Activated naive CD4-positive, alpha-beta T cell treated with anti-CD3 and anti-CD28 coated beads for 36 hours (primary cell): ENCODE measurements at regions of chr5 and their contacts with region 1.

Region 1: DNA sequence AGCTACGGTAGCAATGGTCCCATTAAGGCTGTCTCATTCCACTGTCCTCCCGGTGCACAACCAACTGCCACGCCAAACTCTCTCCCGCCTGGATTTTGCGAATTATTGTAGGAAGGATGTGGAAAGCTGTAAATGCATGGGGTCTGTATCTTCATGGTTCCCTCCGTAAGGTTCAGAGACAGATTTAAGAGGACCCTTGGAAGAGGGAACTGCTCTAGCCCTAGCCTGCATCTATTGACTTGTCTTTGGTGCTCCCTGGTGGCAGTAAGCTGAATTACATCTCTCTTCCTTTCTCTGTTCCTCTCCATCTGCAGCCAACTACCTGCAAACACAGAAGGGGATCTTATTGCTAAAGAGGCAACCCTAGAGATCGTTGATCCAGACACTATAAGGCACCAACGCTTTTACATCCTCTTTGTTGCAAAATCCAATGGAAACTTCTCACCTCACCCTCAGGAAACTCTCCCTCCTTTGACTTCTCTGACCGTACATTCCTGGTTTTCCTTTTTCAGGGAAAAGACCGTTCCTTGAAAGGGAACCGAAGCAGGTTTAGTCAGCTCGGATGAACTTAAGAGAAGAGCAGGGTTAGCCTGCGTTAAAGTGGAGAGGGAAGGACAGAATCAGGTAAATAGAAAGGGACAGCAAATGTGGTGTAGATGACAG is 11.9 kb downstream of the CAPSL start:
- DNase-seq: peak; percentile 83
- H3K4me3 Mint-ChIP-seq: peak overlapping the region; percentile 16
- H3K27ac Mint-ChIP-seq: no peak overlapping the region
- H3K4me1 Mint-ChIP-seq: peaks cover 46% of the 10 kb centered on the region
- H3K27me3 Mint-ChIP-seq: peaks cover 1% of the 10 kb centered on the region

Region 2: DNA sequence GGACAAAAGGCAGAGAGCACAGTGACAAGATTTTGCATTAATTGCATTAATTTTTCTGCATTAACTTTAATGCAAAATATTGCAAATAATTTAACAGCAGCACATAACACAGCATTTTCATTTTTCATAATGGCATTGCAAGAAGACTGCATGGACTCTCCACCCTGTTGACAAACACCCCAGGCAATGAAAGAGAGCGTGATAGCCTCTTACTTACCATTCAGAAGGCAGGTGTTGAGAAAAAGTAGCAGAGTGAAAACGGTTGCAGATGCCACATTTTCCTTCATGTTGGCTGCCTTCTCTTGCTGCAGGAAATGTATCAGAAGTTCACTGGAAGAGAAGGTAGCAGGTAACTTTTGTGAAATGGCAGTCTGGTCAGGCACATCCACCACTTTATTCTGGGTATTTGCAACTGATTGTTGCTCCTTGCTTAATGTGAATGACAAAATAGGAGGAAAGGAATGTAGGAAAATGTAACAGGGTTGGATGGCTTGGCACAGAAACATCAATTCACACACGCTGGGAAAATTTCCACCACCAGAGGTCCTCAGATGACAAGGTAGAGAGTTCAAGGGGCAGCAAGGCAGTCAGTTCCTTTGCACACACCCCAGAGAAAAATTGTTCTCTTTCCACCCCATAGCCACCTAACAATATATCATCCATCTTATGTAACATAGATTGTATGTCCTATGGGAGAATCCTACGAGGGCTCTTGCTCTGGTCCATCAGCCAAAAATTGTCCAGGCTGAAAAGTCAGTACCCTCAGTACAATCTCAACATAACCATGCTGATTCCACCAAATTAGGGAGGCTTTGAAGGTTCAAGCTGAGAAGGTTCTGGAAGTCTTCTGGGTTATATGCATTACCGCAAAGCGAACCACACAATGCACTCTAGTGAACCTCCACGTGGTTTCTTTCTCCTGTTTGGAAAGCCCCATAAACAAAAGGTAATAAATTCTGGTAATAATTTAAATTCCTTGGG is 836.9 kb before region 1 on chr5:
- CTCF ChIA-PET with region 1: interaction called, 23 read pairs
- intact Hi-C with region 1: loop called (anchors 1 kb)
- DNase-seq: peak; percentile 79
- H3K4me3 Mint-ChIP-seq: no peak overlapping the region
- H3K27ac Mint-ChIP-seq: no peak overlapping the region
- H3K4me1 Mint-ChIP-seq: no peaks in the 10 kb centered on the region
- H3K27me3 Mint-ChIP-seq: peaks cover 4% of the 10 kb centered on the region

Region 3: GRCh38 chr5:35242702-35243258 is 683.7 kb before region 1 on chr5:
- CTCF ChIA-PET with region 1: no interaction called
- intact Hi-C with region 1: no loop called
- DNase-seq: no peak
- H3K4me3 Mint-ChIP-seq: no peak overlapping the region
- H3K27ac Mint-ChIP-seq: no peak overlapping the region
- H3K4me1 Mint-ChIP-seq: no peaks in the 10 kb centered on the region
- H3K27me3 Mint-ChIP-seq: no peaks in the 10 kb centered on the region

Region 4: DNA sequence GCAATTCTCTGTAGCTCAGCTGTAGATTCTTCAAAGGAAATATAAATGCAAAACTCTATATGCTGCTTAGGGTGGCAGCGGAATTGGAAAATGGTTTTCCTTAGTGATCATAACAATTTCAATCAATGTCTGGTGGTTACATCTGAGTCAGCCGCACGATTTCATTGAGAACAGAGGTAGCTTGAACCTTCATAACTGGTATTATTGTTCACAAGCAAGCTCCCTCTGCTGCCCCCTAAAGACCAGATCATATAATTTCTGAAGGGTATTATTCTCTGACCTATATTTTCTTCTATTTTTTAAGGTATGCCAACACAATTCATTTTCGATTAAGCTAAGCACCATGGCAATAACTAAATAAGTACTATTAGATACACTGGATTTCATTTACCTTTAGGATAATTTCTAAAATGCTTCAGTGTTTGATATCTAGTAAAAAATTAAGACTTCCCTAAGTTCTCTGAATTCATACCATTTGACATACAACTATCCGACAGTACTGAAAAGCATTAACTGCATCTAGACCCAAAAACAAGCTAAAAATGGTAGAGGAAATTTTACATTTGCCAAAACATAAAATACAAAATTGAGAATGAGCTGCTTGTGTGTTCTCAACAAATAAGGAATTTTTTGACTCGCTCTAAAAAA is 490.0 kb before region 1 on chr5:
- CTCF ChIA-PET with region 1: interaction called, 8 read pairs
- intact Hi-C with region 1: loop called (anchors 2 kb)
- DNase-seq: peak; percentile 7
- H3K4me3 Mint-ChIP-seq: no peak overlapping the region
- H3K27ac Mint-ChIP-seq: no peak overlapping the region
- H3K4me1 Mint-ChIP-seq: no peaks in the 10 kb centered on the region
- H3K27me3 Mint-ChIP-seq: peaks cover 44% of the 10 kb centered on the region

Region 5: DNA sequence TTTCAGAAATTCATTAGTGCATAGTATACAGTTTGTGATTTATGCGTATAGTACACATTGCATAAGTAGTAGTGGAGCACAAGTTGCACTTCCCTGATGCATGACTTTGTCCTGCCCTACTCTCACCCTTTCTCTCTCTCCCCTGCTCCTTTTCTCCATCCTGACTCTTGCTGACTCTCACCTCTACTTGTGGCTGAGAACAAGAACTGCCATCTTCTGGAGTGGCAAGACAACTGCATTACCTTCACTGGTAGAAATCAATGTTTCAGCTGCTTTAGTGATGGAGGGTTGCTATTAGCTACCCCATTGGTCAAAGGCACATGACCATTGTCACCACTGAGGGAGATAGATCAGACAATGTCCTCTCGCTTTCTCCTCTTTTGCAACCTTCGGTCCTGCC is 282.0 kb before region 1 on chr5:
- CTCF ChIA-PET with region 1: interaction called, 146 read pairs
- intact Hi-C with region 1: no loop called
- DNase-seq: no peak
- H3K4me3 Mint-ChIP-seq: no peak overlapping the region
- H3K27ac Mint-ChIP-seq: no peak overlapping the region
- H3K4me1 Mint-ChIP-seq: no peaks in the 10 kb centered on the region
- H3K27me3 Mint-ChIP-seq: no peaks in the 10 kb centered on the region

Region 6: DNA sequence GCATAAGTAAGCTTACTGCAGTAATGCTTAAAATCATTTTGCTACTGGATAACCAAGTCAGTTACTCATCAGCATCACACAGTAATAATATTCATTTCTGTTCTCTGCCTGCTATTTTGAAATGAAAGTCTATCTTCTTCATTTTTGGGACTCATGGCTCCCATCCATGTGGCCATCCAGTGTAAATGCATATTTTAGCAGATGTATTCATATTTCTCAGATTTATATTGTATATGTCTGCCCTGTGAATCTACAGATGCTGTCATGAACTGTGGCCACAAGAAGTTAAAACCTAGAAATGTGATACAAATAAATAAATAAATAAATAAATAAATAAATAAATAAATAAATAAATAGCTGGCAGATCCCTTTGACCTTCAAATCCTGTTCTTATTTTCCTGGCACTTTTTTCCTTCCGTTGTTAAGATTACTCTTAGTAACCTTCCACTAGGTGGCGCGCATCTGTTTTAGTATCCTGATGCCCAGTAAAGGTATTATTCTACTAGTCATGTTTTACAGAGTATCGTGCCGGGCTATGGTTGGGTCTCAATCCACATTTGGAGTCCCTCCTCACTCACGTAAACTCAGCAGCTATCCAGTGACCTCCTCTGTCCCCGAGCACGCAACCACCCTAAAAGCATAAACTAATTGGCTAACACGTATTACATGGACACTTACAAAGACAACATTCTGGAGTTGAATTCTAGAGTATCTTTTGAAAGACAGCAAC is 149.0 kb before region 1 on chr5:
- CTCF ChIA-PET with region 1: interaction called, 109 read pairs
- intact Hi-C with region 1: loop called (anchors 1 kb)
- DNase-seq: peak; percentile 88
- H3K4me3 Mint-ChIP-seq: peak overlapping the region; percentile 46
- H3K27ac Mint-ChIP-seq: peak overlapping the region; percentile 85
- H3K4me1 Mint-ChIP-seq: peaks cover 74% of the 10 kb centered on the region
- H3K27me3 Mint-ChIP-seq: no peaks in the 10 kb centered on the region

Region 7: GRCh38 chr5:35852084-35852734 is 74.3 kb before region 1 on chr5:
- CTCF ChIA-PET with region 1: interaction called, 24 read pairs
- intact Hi-C with region 1: loop called (anchors 1 kb)
- DNase-seq: peak; percentile 78
- H3K4me3 Mint-ChIP-seq: peak overlapping the region; percentile 91
- H3K27ac Mint-ChIP-seq: peak overlapping the region; percentile 100
- H3K4me1 Mint-ChIP-seq: peaks cover 63% of the 10 kb centered on the region
- H3K27me3 Mint-ChIP-seq: no peaks in the 10 kb centered on the region

Region 8: GRCh38 chr5:35908228-35908627 is 18.3 kb before region 1 on chr5:
- CTCF ChIA-PET with region 1: interaction called, 22 read pairs
- intact Hi-C with region 1: loop called (anchors 1 kb)
- DNase-seq: no peak
- H3K4me3 Mint-ChIP-seq: no peak overlapping the region
- H3K27ac Mint-ChIP-seq: peak overlapping the region; percentile 72
- H3K4me1 Mint-ChIP-seq: peaks cover 43% of the 10 kb centered on the region
- H3K27me3 Mint-ChIP-seq: no peaks in the 10 kb centered on the region